HEK293 (cell line): ENCODE measurements at regions of chr6 and their contacts with region 1.

Region 1: GRCh38 chr6:134002821-134003220 is 49.6 kb downstream of the SLC2A12 start:
- H3K4me3 ChIP-seq: no peak overlapping the region
- H3K27ac ChIP-seq: no peak overlapping the region
- H3K4me1 ChIP-seq: no peaks in the 10 kb centered on the region
- CTCF ChIP-seq: no peak

Region 2: GRCh38 chr6:133682506-133683307 is 320.1 kb before region 1 on chr6:
- CTCF ChIA-PET with region 1: no interaction called
- POLR2A ChIA-PET with region 1: no interaction called
- H3K4me3 ChIP-seq: no peak overlapping the region
- H3K27ac ChIP-seq: no peak overlapping the region
- H3K4me1 ChIP-seq: no peaks in the 10 kb centered on the region
- CTCF ChIP-seq: no peak

Region 3: GRCh38 chr6:133991096-133991593 is 11.7 kb before region 1 on chr6:
- CTCF ChIA-PET with region 1: interaction called, 13 read pairs
- POLR2A ChIA-PET with region 1: no interaction called
- H3K4me3 ChIP-seq: no peak overlapping the region
- H3K27ac ChIP-seq: no peak overlapping the region
- H3K4me1 ChIP-seq: peaks cover 12% of the 10 kb centered on the region
- CTCF ChIP-seq: no peak

Region 4: GRCh38 chr6:134295953-134296553 is 293.2 kb after region 1 on chr6:
- CTCF ChIA-PET with region 1: no interaction called
- POLR2A ChIA-PET with region 1: no interaction called
- H3K4me3 ChIP-seq: no peak overlapping the region
- H3K27ac ChIP-seq: no peak overlapping the region
- H3K4me1 ChIP-seq: peaks cover 8% of the 10 kb centered on the region
- CTCF ChIP-seq: no peak